ENCODE measurements at regions of chr14 and their contacts with region 1.

Region 1: DNA sequence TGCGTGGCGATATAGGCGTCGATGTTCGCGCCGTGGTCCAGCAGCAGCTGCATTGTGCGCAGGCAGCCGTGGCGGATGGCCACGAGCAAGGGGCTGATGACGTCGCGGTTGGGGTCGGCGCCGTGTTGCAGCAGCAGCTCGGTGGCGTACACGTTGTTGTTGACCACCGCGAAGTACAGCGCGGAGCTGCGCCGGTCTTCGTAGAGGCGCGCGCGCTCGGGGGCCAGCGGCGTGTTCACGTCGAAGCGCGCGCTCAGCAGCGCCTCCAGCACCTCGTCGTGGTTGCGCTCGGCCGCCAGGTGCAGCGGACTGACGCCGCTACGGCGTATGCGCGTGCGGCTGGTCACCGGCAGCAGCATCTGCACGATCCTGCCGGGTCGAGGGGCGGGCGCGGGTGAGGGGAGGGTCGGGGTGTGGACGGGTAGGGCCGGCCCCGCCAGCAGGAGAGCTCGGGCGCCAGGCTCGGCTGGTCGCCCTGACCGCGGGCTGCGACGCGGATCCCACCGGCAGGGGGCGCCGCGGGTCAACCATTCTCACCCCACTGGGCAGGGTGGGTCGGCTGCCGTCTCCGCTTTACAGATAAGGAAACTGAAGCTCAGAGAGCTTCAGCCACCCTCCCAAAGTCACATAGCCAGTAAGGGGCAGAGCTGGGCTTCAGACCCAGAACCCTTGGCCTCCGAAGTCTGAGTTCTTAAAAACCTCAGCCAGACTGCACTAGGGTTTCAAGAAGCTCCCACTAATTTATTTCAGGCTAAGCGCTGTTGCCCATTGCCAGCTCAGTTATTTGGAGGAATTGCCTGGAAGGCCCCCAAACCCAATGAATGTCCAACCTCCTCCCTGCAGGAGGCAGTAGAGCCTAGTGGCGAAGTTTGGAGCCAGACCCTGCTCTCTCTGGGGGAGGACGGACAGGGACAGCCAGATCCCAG is 12.4 kb downstream of the FAM181A start:
- DNase-seq: peak; percentile 57 to 96 (median 85)
- ATAC-seq: peak; percentile 95 to 98 (median 96)
- H3K4me3 ChIP-seq: peak overlapping the region; percentile 29 to 35
- H3K4me3 Mint-ChIP-seq: peak overlapping the region; percentile 39 to 58 (median 47)
- H3K27ac ChIP-seq: no peak overlapping the region
- H3K27ac Mint-ChIP-seq: peak overlapping the region in 1 of 2 donors; percentile 6
- H3K4me1 ChIP-seq: peaks cover 0 to 9% of the 10 kb centered on the region in 2 experiments
- H3K4me1 Mint-ChIP-seq: peaks cover 0 to 8% (median 5%) of the 10 kb centered on the region in 3 donors
- H3K27me3 ChIP-seq: peaks cover 0 to 17% of the 10 kb centered on the region in 2 experiments
- H3K27me3 Mint-ChIP-seq: peaks cover 4 to 6% of the 10 kb centered on the region in 2 donors

Region 2: DNA sequence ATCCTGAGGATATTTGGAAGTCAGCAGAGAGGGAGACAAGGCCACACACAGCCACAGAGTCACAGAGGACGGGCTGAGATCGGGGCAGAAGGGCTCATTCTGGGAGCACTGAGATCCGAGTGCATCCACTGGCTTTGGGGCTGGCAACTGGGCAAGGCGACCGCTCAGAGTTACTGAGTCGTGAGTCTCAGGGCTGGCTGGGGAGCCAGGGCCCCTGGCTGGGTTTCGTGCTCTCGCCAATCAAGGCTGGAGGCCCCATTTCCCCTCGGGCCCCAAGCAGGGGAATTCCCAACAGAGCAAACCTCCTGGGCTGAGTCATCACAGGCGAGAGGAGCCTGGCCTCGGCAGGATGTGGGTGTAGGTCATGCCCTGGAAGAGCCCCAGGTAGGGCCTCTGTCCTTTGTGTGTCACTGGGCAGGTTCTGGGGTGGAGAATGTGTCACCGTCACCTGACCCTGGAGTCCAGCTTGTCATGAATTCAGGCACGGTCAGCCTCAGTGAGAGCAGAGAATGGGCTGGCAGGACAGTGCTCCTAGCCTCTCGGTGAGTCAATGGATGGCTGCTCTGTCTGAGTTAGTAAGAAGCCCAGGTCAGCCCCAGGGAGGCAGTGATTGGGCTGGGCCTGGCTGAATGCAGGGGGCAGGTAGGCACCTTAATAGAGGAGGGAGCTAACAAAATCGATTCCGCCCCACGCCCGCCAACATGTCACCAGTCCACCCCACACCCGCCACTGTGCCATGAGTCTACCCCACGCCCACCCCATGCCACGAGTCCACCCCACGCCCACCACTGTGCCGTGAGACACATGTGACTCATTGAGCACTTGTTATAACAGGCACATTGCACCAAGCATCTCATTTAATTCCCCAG is 19.9 kb after region 1 on chr14:
- CTCF ChIA-PET with region 1: interaction called, 3 to 36 read pairs
- POLR2A ChIA-PET with region 1: no interaction called
- DNase-seq: peak; percentile 71 to 94 (median 90)
- ATAC-seq: peak; percentile 80 to 88 (median 83)
- H3K4me3 ChIP-seq: peak overlapping the region; percentile 2 to 7
- H3K4me3 Mint-ChIP-seq: peak overlapping the region; percentile 42 to 78 (median 70)
- H3K27ac ChIP-seq: peak overlapping the region; percentile 93
- H3K27ac Mint-ChIP-seq: peak overlapping the region; percentile 95
- H3K4me1 ChIP-seq: peaks cover 47 to 98% of the 10 kb centered on the region in 2 experiments
- H3K4me1 Mint-ChIP-seq: peaks cover 90 to 96% (median 95%) of the 10 kb centered on the region in 3 donors
- H3K27me3 ChIP-seq: peaks cover 0 to 3% of the 10 kb centered on the region in 2 experiments
- H3K27me3 Mint-ChIP-seq: no peaks in the 10 kb centered on the region

Region 3: GRCh38 chr14:93970549-93970946 is 31.0 kb after region 1 on chr14:
- CTCF ChIA-PET with region 1: interaction called, 26 to 90 read pairs
- POLR2A ChIA-PET with region 1: interaction called in 1 of 2 experiments, 3 read pairs
- DNase-seq: peak; percentile 46 to 83 (median 67)
- ATAC-seq: peak; percentile 90 to 96 (median 92)
- H3K4me3 ChIP-seq: peak overlapping the region; percentile 60 to 63
- H3K4me3 Mint-ChIP-seq: peak overlapping the region; percentile 83 to 86 (median 83)
- H3K27ac ChIP-seq: peak overlapping the region; percentile 26
- H3K27ac Mint-ChIP-seq: peak overlapping the region; percentile 83 to 90
- H3K4me1 ChIP-seq: peaks cover 3 to 62% of the 10 kb centered on the region in 2 experiments
- H3K4me1 Mint-ChIP-seq: peaks cover 38 to 49% (median 39%) of the 10 kb centered on the region in 3 donors
- H3K27me3 ChIP-seq: peaks cover 0 to 11% of the 10 kb centered on the region in 2 experiments
- H3K27me3 Mint-ChIP-seq: no peaks in the 10 kb centered on the region

Region 4: GRCh38 chr14:93977790-93978581 is 38.4 kb after region 1 on chr14:
- CTCF ChIA-PET with region 1: interaction called, 26 to 90 read pairs
- POLR2A ChIA-PET with region 1: no interaction called
- DNase-seq: peak; percentile 42 to 89 (median 61)
- ATAC-seq: peak; percentile 90 to 95 (median 94)
- H3K4me3 ChIP-seq: peak overlapping the region in 1 of 2 donors; percentile 15
- H3K4me3 Mint-ChIP-seq: peak overlapping the region in 2 of 3 donors; percentile 31 to 64
- H3K27ac ChIP-seq: peak overlapping the region; percentile 67
- H3K27ac Mint-ChIP-seq: peak overlapping the region; percentile 90 to 91
- H3K4me1 ChIP-seq: peaks cover 10 to 62% of the 10 kb centered on the region in 2 experiments
- H3K4me1 Mint-ChIP-seq: peaks cover 53 to 62% (median 53%) of the 10 kb centered on the region in 3 donors
- H3K27me3 ChIP-seq: peaks cover 0 to 24% of the 10 kb centered on the region in 2 experiments
- H3K27me3 Mint-ChIP-seq: peaks cover 0 to under 1% of the 10 kb centered on the region in 2 donors

Region 5: GRCh38 chr14:94001501-94002396 is 62.2 kb after region 1 on chr14:
- CTCF ChIA-PET with region 1: interaction called, 30 to 32 read pairs
- POLR2A ChIA-PET with region 1: no interaction called
- DNase-seq: peak in 33 of 35 experiments; percentile 3 to 81 (median 40)
- ATAC-seq: peak; percentile 71 to 86 (median 76)
- H3K4me3 ChIP-seq: no peak overlapping the region
- H3K4me3 Mint-ChIP-seq: peak overlapping the region in 1 of 3 donors; percentile 29
- H3K27ac ChIP-seq: no peak overlapping the region
- H3K27ac Mint-ChIP-seq: no peak overlapping the region
- H3K4me1 ChIP-seq: peaks cover 0 to 12% of the 10 kb centered on the region in 2 experiments
- H3K4me1 Mint-ChIP-seq: peaks cover 7 to 12% (median 9%) of the 10 kb centered on the region in 3 donors
- H3K27me3 ChIP-seq: peaks cover 0 to 34% of the 10 kb centered on the region in 2 experiments
- H3K27me3 Mint-ChIP-seq: peaks cover 7% of the 10 kb centered on the region in 2 donors

Region 6: GRCh38 chr14:94011795-94012194 is 72.2 kb after region 1 on chr14:
- CTCF ChIA-PET with region 1: interaction called in 1 of 2 experiments, 10 read pairs
- POLR2A ChIA-PET with region 1: no interaction called
- DNase-seq: peak in 18 of 35 experiments; percentile 2 to 68 (median 19)
- ATAC-seq: peak; percentile 60 to 93 (median 78)
- H3K4me3 ChIP-seq: no peak overlapping the region
- H3K4me3 Mint-ChIP-seq: peak overlapping the region in 1 of 3 donors; percentile 62
- H3K27ac ChIP-seq: no peak overlapping the region
- H3K27ac Mint-ChIP-seq: peak overlapping the region; percentile 63 to 72
- H3K4me1 ChIP-seq: peaks cover 4 to 43% of the 10 kb centered on the region in 2 experiments
- H3K4me1 Mint-ChIP-seq: peaks cover 44 to 54% (median 44%) of the 10 kb centered on the region in 3 donors
- H3K27me3 ChIP-seq: peaks cover 0 to 43% of the 10 kb centered on the region in 2 experiments
- H3K27me3 Mint-ChIP-seq: peaks cover 0 to 6% of the 10 kb centered on the region in 2 donors

Region 7: GRCh38 chr14:94161981-94162380 is 222.4 kb after region 1 on chr14:
- CTCF ChIA-PET with region 1: no interaction called
- POLR2A ChIA-PET with region 1: no interaction called
- DNase-seq: no peak
- ATAC-seq: no peak
- H3K4me3 ChIP-seq: no peak overlapping the region
- H3K4me3 Mint-ChIP-seq: no peak overlapping the region
- H3K27ac ChIP-seq: peak overlapping the region; percentile 33
- H3K27ac Mint-ChIP-seq: peak overlapping the region; percentile 86 to 88
- H3K4me1 ChIP-seq: peaks cover 6 to 20% of the 10 kb centered on the region in 2 experiments
- H3K4me1 Mint-ChIP-seq: peaks cover 58 to 75% (median 65%) of the 10 kb centered on the region in 3 donors
- H3K27me3 ChIP-seq: peaks cover 0 to 10% of the 10 kb centered on the region in 2 experiments
- H3K27me3 Mint-ChIP-seq: peaks cover 0 to 3% of the 10 kb centered on the region in 2 donors